ENCODE measurements at regions of chr1 and their contacts with region 1.

Region 1: GRCh38 chr1:105072850-105073249 is 1323.2 kb downstream of the AMY1C start:
- DNase-seq: peak in 1 of 4 experiments; percentile 1
- ATAC-seq: no peak
- H3K4me3 ChIP-seq: no peak overlapping the region
- H3K27ac ChIP-seq: no peak overlapping the region
- H3K4me1 ChIP-seq: no peaks in the 10 kb centered on the region
- H3K27me3 ChIP-seq: no peaks in the 10 kb centered on the region
- CTCF ChIP-seq: no peak
- EP300 ChIP-seq: no peak
- POLR2A ChIP-seq: no peak
- RAD21 ChIP-seq: no peak

Region 2: GRCh38 chr1:104973516-104973915 is 99.3 kb before region 1 on chr1:
- CTCF ChIA-PET with region 1: no interaction called
- POLR2A ChIA-PET with region 1: no interaction called
- in situ Hi-C with region 1: loop called (anchors 5 kb)
- intact Hi-C with region 1: no loop called
- DNase-seq: no peak
- ATAC-seq: no peak
- H3K4me3 ChIP-seq: no peak overlapping the region
- H3K27ac ChIP-seq: no peak overlapping the region
- H3K4me1 ChIP-seq: no peaks in the 10 kb centered on the region
- H3K27me3 ChIP-seq: no peaks in the 10 kb centered on the region
- CTCF ChIP-seq: no peak
- EP300 ChIP-seq: no peak
- POLR2A ChIP-seq: no peak
- RAD21 ChIP-seq: no peak